Ascending aorta (tissue), 2 donors: ENCODE measurements at regions of chr4 and their contacts with region 1.

Region 1: DNA sequence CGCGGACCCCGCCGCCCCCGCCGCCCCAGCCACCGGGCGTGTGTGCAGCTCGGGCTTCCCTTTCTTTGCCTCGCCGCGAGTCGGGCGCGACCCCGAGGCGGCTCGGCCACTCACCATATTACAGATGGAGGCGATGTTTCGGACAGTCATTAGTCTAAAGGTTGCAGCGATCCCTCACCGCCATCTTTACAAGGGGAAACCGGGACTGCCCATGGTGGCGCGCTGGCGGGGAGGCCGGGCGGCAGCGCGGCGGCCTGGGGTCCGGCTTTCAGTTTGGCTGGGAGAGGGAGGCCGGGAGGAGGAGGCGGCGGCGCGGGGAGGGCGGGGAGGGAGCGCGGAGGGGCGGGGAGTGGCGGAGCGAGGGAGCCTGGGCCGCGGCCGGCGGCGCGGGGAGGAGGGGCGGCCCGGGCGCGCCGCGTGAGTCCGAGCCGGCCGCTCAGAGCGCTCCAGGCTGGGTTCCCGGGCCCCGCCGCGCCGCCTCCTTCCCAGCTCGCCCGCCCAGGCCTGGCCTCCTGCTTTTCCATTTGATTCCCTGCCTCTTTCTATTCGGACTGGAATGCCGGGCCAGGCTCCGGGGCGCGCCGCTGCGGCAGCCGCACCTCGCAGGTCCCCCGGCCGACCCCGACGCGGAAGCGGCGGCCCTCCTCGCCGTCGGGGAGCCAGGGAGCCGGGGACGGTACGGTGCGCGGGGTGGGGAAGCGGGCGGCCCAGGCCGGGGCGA is at the start of gene USP46:
- DNase-seq: peak; percentile 15 to 86
- H3K4me3 ChIP-seq: peak within 1 kb of the TSS; percentile 75 to 97
- H3K27ac ChIP-seq: peak within 1 kb of the TSS; percentile 95 to 96
- H3K4me1 ChIP-seq: peaks cover 0 to 9% of the 10 kb centered on the region in 2 donors
- H3K27me3 ChIP-seq: no peaks in the 10 kb centered on the region
- CTCF ChIP-seq: no peak
- total RNA-seq, gene USP46: 7.5 TPM

Region 2: DNA sequence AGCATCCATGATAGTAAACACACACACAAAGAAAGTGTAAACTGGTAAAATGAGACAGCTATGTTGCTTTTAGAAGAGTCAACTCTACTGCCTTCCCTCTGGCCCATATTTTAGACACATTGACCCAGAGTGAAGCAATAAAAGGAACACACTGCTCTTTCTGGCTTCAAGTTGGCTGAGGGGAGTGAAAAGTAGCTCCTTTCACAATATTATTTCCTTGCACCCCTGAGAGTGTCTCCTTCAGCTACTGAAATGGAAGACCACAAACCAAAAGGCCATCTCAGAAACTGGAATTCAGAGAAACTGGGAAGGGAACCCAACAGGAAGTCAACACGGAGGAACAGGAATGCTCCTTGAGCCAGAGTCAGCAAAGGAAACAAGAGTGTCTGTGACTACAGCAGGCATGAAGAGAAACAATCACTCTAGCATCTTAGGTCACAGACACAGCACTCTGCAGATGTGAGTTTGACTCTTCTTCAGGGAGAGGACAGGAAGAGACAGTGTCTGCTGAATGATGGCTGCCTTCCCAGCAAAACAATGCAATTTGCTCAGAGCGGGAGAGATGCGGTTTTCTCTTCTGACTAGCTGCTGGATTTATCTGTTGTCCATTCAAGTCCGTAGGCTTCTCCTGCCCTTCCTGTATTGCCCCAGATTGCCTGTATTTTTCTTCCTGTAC is 501.4 kb before region 1 on chr4:
- intact Hi-C with region 1: no loop called
- DNase-seq: no peak
- H3K4me3 ChIP-seq: no peak overlapping the region
- H3K27ac ChIP-seq: no peak overlapping the region
- H3K4me1 ChIP-seq: no peaks in the 10 kb centered on the region
- H3K27me3 ChIP-seq: no peaks in the 10 kb centered on the region
- CTCF ChIP-seq: no peak

Region 3: DNA sequence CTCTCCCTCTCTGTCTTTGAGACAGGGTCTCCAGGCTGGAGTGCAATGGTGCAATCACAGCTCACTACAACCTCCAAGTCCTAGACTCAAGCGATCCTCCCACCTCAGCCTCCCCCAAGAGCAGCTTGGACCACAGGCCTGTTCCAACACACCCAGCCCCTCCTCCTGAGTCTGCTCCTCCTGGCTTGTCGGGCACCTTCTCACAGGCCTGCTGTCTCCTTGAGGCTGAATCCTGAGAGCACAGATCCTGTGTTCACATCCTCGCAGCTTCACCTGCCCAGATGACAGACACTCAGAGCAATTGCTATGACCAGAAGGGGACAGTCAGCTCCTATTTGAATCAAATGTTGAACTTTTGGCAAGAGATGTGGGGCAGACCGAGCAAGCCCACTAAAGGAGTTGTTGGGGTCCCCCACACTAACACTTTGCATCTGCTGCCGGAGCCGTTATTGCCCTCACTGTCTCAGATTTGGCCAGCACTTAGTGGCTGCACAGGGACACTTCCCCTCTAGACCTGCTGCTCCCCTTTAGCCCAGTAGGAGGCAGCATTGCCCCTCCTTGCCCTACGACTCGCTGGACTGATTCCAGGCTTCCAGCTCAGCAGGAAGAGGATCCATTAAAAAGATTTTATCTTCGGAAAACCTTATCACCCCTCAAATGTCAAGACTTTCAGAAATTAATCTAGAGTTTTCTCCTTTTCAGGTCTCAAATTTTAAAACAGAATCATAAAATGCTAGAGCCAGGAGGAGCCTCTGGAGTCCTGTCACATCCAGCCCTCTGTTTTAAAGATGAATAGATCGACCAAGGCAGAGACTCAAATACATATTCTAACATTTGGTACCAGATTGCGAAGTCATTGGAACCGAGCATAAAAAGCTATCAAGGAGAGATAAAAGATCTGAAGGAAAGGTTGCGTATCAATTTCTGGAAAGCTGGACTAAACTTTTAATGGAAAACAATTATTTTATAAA is 113.8 kb before region 1 on chr4:
- intact Hi-C with region 1: loop called (anchors 2 kb)
- DNase-seq: peak in 1 of 2 donors; percentile 83
- H3K4me3 ChIP-seq: no peak overlapping the region
- H3K27ac ChIP-seq: no peak overlapping the region
- H3K4me1 ChIP-seq: no peaks in the 10 kb centered on the region
- H3K27me3 ChIP-seq: no peaks in the 10 kb centered on the region
- CTCF ChIP-seq: peak; percentile 85 to 92 (median 88)

Region 4: DNA sequence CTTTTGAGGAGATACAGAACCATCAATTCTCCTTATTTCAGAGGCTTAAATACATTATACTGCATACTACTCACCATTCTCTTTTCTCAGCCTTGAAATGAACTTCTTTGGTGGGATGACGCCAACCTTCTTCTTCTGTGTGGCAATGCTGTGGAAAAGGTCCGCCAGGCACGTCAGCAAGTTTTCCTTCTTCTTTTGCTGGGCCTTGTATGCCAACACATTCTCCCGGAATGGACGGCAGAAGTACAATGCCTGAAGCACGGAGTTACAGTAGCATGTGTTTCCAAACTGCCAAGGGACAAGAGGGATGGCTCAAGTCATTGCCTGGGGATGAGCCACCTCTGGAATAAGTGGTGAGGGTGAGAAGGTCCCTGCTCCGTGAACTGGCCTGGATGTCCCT is 31.3 kb before region 1 on chr4:
- intact Hi-C with region 1: loop called (anchors 1 kb)
- DNase-seq: peak; percentile 10 to 69
- H3K4me3 ChIP-seq: peak overlapping the region in 1 of 2 donors; percentile 4
- H3K27ac ChIP-seq: peak overlapping the region; percentile 42 to 72
- H3K4me1 ChIP-seq: peaks cover 0 to 4% of the 10 kb centered on the region in 2 donors
- H3K27me3 ChIP-seq: no peaks in the 10 kb centered on the region
- CTCF ChIP-seq: no peak

Region 5: DNA sequence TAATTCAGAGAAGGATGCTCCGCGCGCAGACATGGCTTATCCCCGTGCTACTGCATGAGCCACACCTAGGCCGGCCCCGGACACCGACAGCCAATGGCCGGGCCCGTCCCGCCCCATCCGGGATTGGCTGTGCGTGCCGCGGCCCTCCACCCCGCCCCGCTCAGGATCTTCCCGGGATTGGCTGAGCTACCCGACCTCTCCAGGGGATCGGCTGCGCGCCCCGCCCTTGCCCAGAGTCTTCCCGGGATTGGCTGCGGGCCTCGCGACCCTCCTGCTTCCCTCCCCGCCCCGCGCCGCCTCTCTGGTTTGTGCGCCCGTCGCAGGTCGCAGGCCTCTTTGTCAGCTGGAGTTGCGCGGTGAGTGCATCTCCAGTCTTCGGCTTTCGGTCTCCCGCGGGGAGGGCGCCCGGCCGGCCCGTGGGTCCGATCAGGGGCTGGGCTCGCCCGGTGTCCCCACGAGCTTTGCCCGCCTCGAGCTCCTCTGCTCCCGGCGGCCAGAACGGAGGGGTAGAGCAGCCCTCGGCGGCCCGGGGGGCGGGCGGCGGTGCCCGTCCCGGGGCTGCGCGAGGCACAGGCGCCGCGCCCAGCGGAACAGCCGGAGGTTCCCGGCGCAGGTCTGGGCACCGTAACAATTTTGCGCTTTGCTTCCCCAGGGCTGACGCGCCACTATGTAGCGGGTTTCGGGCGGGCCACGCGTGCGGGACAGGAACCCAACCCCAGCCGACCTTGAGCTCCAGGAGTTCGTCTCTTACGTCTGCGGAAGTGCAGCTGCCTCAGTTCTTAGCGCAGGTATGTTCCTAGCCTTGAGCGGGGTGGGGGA is 53.2 kb after region 1 on chr4:
- intact Hi-C with region 1: loop called (anchors 1 kb)
- DNase-seq: peak; percentile 93 to 99
- H3K4me3 ChIP-seq: peak overlapping the region; percentile 85 to 86
- H3K27ac ChIP-seq: peak overlapping the region; percentile 91 to 93
- H3K4me1 ChIP-seq: peaks cover 9 to 16% of the 10 kb centered on the region in 2 donors
- H3K27me3 ChIP-seq: no peaks in the 10 kb centered on the region
- CTCF ChIP-seq: no peak

Region 6: GRCh38 chr4:52837726-52838558 is 178.8 kb after region 1 on chr4:
- intact Hi-C with region 1: no loop called
- DNase-seq: no peak
- H3K4me3 ChIP-seq: no peak overlapping the region
- H3K27ac ChIP-seq: no peak overlapping the region
- H3K4me1 ChIP-seq: no peaks in the 10 kb centered on the region
- H3K27me3 ChIP-seq: no peaks in the 10 kb centered on the region
- CTCF ChIP-seq: no peak

Region 7: DNA sequence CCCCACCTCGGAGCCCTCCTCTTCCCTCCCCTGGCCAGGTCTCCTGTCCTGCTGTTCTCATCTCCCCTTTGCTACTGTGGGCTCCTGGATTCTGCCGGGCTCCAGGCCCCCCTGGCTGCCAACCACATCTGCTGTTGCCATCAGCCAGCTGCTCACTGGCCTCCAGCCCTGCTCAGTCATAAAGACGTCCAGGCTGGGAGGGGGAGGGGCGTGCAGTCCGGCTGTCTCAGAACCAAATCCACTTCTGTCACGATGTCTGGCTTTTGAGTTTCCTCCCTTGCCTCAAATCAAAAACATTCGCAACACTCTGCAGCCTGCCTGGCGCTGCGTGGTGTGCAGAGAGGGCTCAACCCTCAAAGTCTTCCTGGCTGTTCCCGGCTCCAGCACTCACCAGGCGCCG is 210.0 kb after region 1 on chr4:
- intact Hi-C with region 1: loop called (anchors 5 kb)
- DNase-seq: peak; percentile 30 to 75
- H3K4me3 ChIP-seq: peak overlapping the region in 1 of 2 donors; percentile 45
- H3K27ac ChIP-seq: peak overlapping the region; percentile 67 to 79
- H3K4me1 ChIP-seq: peaks cover 0 to 30% of the 10 kb centered on the region in 2 donors
- H3K27me3 ChIP-seq: no peaks in the 10 kb centered on the region
- CTCF ChIP-seq: no peak